Ascending aorta (tissue), 2 donors: ENCODE measurements at regions of chr6 and their contacts with region 1.

Region 1: DNA sequence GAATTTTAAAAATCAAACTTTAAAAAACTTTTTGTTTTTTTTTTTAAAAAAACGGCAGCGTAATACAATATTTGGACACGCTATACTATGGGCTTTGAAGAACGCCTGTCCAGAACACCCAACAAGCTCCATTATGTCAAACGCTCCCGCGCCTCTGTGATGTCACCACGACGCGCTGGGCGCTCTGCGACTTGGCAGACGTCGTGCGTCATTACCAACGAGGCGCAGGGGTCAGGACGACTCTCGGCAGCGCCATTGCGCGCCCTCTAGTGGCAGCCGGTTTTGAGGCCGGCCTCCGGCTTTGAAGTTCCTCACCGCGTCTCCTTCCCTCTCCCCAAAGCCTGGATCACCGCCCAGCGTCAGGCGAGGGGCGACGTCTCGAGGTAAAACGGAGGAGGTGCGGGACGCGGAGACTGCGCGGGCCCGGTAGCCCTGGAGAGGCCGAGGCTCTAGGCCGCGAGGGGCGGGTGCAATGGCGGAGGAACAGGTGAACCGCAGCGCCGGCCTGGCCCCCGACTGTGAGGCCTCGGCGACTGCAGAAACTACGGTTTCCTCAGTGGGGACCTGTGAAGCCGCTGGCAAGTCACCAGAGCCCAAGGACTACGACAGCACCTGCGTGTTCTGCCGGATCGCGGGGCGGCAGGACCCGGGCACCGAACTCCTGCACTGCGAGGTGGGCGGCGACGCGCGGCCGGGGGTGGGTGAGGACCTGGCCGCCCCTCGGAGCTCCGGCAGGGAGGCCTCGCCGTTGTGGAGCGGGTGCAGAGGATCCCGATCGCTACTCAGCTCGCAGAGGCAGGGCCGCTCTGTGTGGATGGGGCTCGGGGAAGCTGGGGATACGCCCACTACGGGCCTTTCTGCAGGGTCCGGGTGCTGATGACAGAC is at the start of gene HINT3:
- DNase-seq: peak; percentile 91 to 98
- H3K4me3 ChIP-seq: peak within 1 kb of the TSS; percentile 87 to 91
- H3K27ac ChIP-seq: peak within 1 kb of the TSS; percentile 79 to 93
- H3K4me1 ChIP-seq: peaks cover 0 to 10% of the 10 kb centered on the region in 2 donors
- H3K27me3 ChIP-seq: no peaks in the 10 kb centered on the region
- CTCF ChIP-seq: peak; percentile 96 to 99 (median 99)
- total RNA-seq, gene HINT3: 5.2 TPM

Region 2: GRCh38 chr6:125444006-125444923 is 512.5 kb before region 1 on chr6:
- intact Hi-C with region 1: loop called (anchors 10 kb)
- DNase-seq: peak in 1 of 2 donors; percentile 84
- H3K4me3 ChIP-seq: peak overlapping the region; percentile 32 to 51
- H3K27ac ChIP-seq: peak overlapping the region; percentile 87
- H3K4me1 ChIP-seq: peaks cover 0 to 15% of the 10 kb centered on the region in 2 donors
- H3K27me3 ChIP-seq: no peaks in the 10 kb centered on the region
- CTCF ChIP-seq: no peak

Region 3: DNA sequence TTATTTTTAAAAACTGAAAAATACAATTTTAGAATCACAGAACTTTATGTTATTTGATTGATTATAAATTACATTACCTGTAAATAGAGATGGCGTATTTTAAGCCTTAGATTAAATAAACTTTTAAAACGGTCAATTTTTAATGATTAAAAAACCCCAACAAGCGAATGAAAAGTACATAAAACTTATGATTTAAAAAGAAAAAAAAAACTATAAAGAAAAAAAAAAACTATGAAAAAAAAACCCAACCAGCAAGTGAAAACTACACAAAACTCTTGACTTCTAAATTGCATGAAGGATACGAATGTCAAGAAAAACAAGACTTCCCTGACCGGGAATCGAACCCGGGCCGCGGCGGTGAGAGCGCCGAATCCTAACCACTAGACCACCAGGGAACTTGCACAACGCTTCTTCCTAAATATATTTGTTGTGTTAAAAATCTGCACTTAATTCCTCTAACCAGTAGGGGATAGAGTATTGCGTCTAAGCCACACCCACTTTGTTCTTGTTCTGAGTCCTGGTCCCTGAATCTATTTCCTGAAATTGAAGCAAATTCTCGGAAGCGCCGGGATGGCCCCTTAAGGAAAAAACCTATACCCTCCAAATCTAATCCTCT is 176.7 kb before region 1 on chr6:
- intact Hi-C with region 1: loop called (anchors 2 kb)
- DNase-seq: peak; percentile 47 to 94
- H3K4me3 ChIP-seq: peak overlapping the region; percentile 56 to 85
- H3K27ac ChIP-seq: peak overlapping the region; percentile 90 to 98
- H3K4me1 ChIP-seq: peaks cover 0 to 6% of the 10 kb centered on the region in 2 donors
- H3K27me3 ChIP-seq: no peaks in the 10 kb centered on the region
- CTCF ChIP-seq: peak in 2 of 3 experiments; percentile 31 to 53

Region 4: GRCh38 chr6:125834348-125834747 is 122.4 kb before region 1 on chr6:
- intact Hi-C with region 1: no loop called
- DNase-seq: no peak
- H3K4me3 ChIP-seq: no peak overlapping the region
- H3K27ac ChIP-seq: peak overlapping the region; percentile 43 to 63
- H3K4me1 ChIP-seq: peaks cover 0 to 6% of the 10 kb centered on the region in 2 donors
- H3K27me3 ChIP-seq: no peaks in the 10 kb centered on the region
- CTCF ChIP-seq: no peak

Region 5: GRCh38 chr6:125918681-125919566 is 37.8 kb before region 1 on chr6:
- intact Hi-C with region 1: loop called (anchors 1 kb)
- DNase-seq: no peak
- H3K4me3 ChIP-seq: peak overlapping the region; percentile 3 to 51
- H3K27ac ChIP-seq: peak overlapping the region; percentile 52 to 76
- H3K4me1 ChIP-seq: peaks cover 0 to 4% of the 10 kb centered on the region in 2 donors
- H3K27me3 ChIP-seq: no peaks in the 10 kb centered on the region
- CTCF ChIP-seq: no peak

Region 6: DNA sequence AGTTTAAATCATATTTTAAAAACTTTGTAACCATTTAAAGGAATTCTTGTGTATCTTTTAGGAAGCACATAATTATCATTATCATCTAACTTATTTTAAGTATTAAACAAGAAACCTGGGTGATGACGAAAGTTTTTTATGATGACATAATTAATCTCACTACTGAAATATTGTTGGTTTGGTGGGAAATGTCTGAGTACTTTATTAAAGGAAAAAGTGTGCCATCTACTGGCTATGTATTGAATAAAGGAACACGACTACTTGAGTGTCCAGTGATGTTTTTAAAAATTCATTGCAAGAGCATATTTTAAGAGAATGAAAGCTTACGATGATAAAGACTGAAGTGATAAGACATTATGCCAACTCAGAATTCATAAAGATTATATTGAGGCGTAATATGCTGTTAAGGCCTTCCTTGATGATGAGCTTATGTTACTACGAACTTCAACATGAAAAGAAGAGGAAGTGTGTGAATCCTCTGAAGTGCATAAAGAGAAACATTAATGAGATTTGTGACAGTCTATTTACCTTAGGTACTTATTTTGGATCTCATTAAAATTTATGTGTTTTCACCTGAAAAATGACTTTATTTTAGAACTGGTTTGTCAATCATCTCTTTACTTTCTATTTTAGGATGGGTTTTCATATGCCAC is 17.6 kb after region 1 on chr6:
- intact Hi-C with region 1: no loop called
- DNase-seq: no peak
- H3K4me3 ChIP-seq: no peak overlapping the region
- H3K27ac ChIP-seq: no peak overlapping the region
- H3K4me1 ChIP-seq: no peaks in the 10 kb centered on the region
- H3K27me3 ChIP-seq: no peaks in the 10 kb centered on the region
- CTCF ChIP-seq: peak; percentile 13 to 54 (median 18)

Region 7: GRCh38 chr6:126015863-126016262 is 59.1 kb after region 1 on chr6:
- intact Hi-C with region 1: no loop called
- DNase-seq: no peak
- H3K4me3 ChIP-seq: no peak overlapping the region
- H3K27ac ChIP-seq: no peak overlapping the region
- H3K4me1 ChIP-seq: no peaks in the 10 kb centered on the region
- H3K27me3 ChIP-seq: no peaks in the 10 kb centered on the region
- CTCF ChIP-seq: no peak

Region 8: DNA sequence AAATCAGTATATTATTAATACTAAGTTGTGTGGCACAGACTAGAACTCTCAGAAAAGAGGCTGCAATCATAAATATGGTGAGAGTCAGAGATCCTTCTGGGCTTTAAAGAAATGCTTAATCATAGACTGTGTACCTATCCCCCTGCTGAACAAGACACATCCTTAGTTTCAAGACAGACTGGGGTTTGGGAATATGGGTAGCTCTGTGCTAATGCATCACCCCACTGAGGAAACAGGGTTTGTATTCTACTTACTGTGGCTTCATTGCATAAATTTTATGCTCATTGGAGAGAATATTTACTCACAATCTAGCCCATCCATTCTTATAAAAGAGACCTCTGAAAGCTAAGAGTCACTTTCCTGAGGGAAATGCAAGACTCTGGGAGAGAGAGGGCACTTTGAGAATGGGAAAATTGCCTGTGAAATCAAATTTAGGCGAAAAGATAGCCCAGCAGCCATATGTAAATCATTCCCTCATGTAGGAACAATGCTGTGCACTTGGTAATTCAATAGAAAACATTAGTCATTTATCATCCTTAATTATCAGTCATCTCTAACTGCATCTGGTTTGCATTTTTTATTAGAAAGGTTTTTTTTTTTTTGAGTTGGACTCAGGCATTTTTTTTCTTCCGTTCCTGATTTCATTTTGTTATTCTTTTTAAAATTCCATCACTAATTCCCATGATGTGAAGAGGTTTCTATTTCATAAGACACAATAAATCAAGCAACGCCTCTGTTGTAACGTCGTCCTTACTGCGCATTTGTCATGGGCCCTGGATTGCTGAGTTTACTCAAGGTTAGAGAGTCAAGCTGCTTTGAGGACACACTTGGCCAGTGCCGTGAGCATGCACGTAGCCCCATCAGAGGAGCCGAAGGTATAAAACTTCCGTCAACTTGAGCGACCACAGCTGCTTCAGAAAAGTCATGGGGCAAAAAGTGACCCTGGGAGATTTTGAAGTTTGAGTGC is 121.3 kb after region 1 on chr6:
- intact Hi-C with region 1: no loop called
- DNase-seq: peak in 1 of 2 donors; percentile 64
- H3K4me3 ChIP-seq: no peak overlapping the region
- H3K27ac ChIP-seq: no peak overlapping the region
- H3K4me1 ChIP-seq: no peaks in the 10 kb centered on the region
- H3K27me3 ChIP-seq: no peaks in the 10 kb centered on the region
- CTCF ChIP-seq: no peak